ENCODE measurements at regions of chr3 and their contacts with region 1.

Region 1: DNA sequence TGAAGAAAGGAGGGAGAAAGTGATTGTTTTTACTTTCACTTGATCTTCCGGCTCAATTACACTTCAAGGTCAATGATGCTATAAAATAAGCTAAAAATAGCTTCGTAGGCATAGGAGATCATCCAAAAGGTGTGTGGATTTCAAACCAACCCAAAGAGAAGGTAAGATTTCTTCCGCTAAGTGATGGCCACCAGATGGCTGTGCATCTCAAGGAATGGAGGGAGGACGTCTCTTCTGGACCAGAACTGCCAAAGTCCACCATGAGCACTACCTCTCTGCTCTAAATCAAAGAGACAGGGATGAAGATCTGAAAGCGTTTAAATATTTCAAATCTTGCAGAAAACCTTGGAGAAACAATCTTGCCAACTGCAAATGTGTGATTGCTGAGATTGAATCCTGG is 199.1 kb upstream of the ZPLD1 start:
- DNase-seq: no peak
- H3K4me3 ChIP-seq: no peak overlapping the region
- H3K27ac ChIP-seq: no peak overlapping the region
- H3K4me1 ChIP-seq: peaks cover 2 to 9% (median 6%) of the 10 kb centered on the region in 4 experiments; a peak in 4 of 7 replicates
- H3K27me3 ChIP-seq: no peaks in the 10 kb centered on the region
- CTCF ChIP-seq: peak; percentile 38 to 73 (median 68)
- EP300 ChIP-seq: no peak
- POLR2A ChIP-seq: no peak
- RAD21 ChIP-seq: peak; percentile 92 to 93

Region 2: DNA sequence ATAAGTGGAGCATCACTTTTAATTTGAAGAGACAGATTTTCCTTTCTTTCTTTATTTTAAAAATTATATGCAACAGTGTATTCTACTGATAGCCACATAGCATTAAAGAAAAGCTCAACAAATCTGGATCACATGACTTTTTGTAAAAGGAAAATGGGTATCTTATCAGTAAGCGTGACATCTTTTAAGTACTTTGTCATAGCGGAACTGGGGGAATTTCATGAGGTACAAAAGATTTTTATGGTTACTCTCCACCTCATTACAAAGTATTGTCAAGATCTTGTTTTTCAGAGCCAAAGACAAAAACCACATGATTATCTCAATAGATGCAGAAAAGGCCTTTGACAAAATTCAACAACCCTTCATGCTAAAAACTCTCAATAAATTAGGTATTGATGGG is 20.5 kb before region 1 on chr3:
- CTCF ChIA-PET with region 1: no interaction called
- POLR2A ChIA-PET with region 1: no interaction called
- DNase-seq: no peak
- H3K4me3 ChIP-seq: no peak overlapping the region
- H3K27ac ChIP-seq: no peak overlapping the region
- H3K4me1 ChIP-seq: no peaks in the 10 kb centered on the region
- H3K27me3 ChIP-seq: no peaks in the 10 kb centered on the region
- CTCF ChIP-seq: no peak
- EP300 ChIP-seq: no peak
- POLR2A ChIP-seq: no peak
- RAD21 ChIP-seq: no peak

Region 3: DNA sequence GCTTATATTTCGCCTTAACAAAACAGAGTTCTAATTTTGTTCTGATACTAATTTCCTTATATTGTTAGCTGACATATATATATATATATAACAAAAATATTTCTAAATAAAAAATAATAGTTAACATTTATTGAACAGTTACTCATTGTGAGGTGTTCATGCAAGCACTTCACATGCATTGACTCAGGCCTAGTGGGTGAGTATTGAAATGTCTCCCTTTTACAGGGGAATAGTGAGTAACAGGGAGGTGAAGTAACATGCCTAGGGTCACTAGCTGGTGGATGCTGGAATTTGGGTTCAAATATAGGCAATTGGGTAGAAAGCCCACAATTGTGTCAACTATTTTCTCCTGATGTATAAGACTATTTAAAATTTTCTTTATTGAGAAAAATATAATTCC is 96.5 kb after region 1 on chr3:
- CTCF ChIA-PET with region 1: no interaction called
- POLR2A ChIA-PET with region 1: no interaction called
- DNase-seq: no peak
- H3K4me3 ChIP-seq: no peak overlapping the region
- H3K27ac ChIP-seq: no peak overlapping the region
- H3K4me1 ChIP-seq: no peaks in the 10 kb centered on the region
- H3K27me3 ChIP-seq: no peaks in the 10 kb centered on the region
- CTCF ChIP-seq: no peak
- EP300 ChIP-seq: no peak
- POLR2A ChIP-seq: no peak
- RAD21 ChIP-seq: no peak

Region 4: DNA sequence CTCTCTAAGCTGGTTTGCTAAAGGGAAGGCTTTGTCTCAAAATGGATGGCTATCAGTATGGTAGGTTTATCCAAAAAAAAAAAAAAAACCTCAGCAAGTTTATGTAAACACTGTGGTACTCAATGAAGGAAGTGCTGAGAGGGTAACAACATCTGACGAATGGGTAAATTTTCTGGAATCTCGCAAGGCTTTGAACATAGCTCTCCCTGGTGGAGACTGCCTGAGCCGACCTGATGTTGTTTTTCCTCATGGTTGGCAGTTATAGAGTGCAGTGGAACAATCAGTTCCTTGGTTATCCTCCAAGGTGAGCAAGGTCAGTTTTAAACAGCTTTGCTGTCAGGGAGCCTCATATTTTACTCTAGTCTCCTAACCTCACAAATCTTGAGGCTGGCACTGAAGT is 293.8 kb after region 1 on chr3:
- CTCF ChIA-PET with region 1: interaction called, 99 read pairs
- POLR2A ChIA-PET with region 1: no interaction called
- DNase-seq: peak in 1 of 2 experiments; percentile 7
- H3K4me3 ChIP-seq: no peak overlapping the region
- H3K27ac ChIP-seq: no peak overlapping the region
- H3K4me1 ChIP-seq: no peaks in the 10 kb centered on the region
- H3K27me3 ChIP-seq: no peaks in the 10 kb centered on the region
- CTCF ChIP-seq: peak; percentile 32 to 78 (median 68)
- EP300 ChIP-seq: no peak
- POLR2A ChIP-seq: no peak
- RAD21 ChIP-seq: peak; percentile 90 to 91

Region 5: GRCh38 chr3:102536456-102536855 is 300.8 kb after region 1 on chr3:
- CTCF ChIA-PET with region 1: interaction called, 99 read pairs
- POLR2A ChIA-PET with region 1: no interaction called
- DNase-seq: no peak
- H3K4me3 ChIP-seq: no peak overlapping the region
- H3K27ac ChIP-seq: no peak overlapping the region
- H3K4me1 ChIP-seq: no peaks in the 10 kb centered on the region
- H3K27me3 ChIP-seq: peaks cover 0 to 1% (median 0%) of the 10 kb centered on the region in 4 experiments; a peak in 1 of 7 replicates
- CTCF ChIP-seq: peak in 2 of 3 experiments; percentile 48 to 51; a peak in 2 of 4 replicates
- EP300 ChIP-seq: no peak
- POLR2A ChIP-seq: no peak
- RAD21 ChIP-seq: peak; percentile 66 to 76